ENCODE measurements at regions of chr5 and their contacts with region 1.

Region 1: DNA sequence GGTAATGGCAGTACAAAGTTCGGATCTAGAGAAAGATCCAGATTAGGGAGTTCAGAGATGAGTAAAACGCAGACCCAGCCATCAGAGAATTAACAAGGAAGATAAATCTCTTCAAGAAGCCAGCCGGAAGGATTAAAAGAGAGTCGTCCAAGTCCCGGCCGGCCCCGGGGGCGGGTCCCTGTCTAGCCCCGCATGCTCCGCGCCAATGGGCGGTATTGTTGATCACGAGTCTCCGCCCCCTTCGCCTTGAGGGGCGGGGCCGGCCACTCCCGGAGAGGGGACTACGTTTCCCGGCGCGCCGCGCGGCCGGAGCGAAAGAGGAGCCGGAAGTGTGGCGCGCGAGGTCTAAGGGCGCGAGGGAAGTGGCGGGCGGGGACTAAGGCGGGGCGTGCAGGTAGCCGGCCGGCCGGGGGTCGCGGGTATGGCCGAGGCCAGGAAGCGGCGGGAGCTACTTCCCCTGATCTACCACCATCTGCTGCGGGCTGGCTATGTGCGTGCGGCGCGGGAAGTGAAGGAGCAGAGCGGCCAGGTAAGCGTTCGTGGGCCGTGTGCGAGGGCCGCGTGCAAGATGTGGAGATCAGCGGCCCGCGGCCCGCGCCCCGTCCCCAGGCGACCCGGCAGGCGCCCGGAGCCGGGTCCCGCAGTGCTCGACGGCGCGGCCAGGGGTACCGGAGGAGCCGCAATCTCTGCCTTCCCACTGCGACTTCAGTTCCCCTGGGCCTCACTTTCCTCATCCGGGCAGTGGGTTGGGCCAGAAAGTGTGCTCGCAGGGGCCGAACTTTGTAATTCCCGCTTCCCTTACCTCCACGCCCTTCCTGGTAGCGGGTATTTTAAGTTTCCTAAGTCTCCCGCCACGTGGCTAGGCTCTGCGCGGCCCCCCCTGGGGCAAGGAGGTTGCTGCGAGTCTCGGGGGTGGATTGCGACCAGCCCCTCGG is at the start of gene TCOF1:
- DNase-seq: peak; percentile 97 to 99 (median 99)
- ATAC-seq: peak; percentile 98 to 99
- H3K4me3 ChIP-seq: peak within 1 kb of the TSS; percentile 70
- H3K27ac ChIP-seq: no peak within 1 kb of the TSS
- H3K4me1 ChIP-seq: no peaks in the 10 kb centered on the region
- H3K27me3 ChIP-seq: no peaks in the 10 kb centered on the region
- total RNA-seq, gene TCOF1: 14.3 to 22.7 (median 17.5) TPM

Region 2: GRCh38 chr5:150129813-150130492 is 227.6 kb before region 1 on chr5:
- intact Hi-C with region 1: loop called in 1 of 4 experiments (anchors 10 kb)
- DNase-seq: peak; percentile 77 to 90 (median 90)
- ATAC-seq: peak; percentile 80 to 85
- H3K4me3 ChIP-seq: no peak overlapping the region
- H3K27ac ChIP-seq: no peak overlapping the region
- H3K4me1 ChIP-seq: no peaks in the 10 kb centered on the region
- H3K27me3 ChIP-seq: no peaks in the 10 kb centered on the region

Region 3: GRCh38 chr5:150409638-150410523 is 52.3 kb after region 1 on chr5:
- intact Hi-C with region 1: no loop called
- DNase-seq: peak; percentile 71 to 85 (median 83)
- ATAC-seq: peak; percentile 89 to 91
- H3K4me3 ChIP-seq: peak overlapping the region; percentile 39
- H3K27ac ChIP-seq: peak overlapping the region; percentile 95
- H3K4me1 ChIP-seq: peaks cover 2% of the 10 kb centered on the region
- H3K27me3 ChIP-seq: no peaks in the 10 kb centered on the region

Region 4: GRCh38 chr5:150449517-150450339 is 92.1 kb after region 1 on chr5 and contains the start of gene RPS14:
- intact Hi-C with region 1: loop called in 1 of 4 experiments (anchors 10 kb)
- DNase-seq: peak; percentile 96 to 98 (median 97)
- ATAC-seq: peak; percentile 97 to 98
- H3K4me3 ChIP-seq: peak within 1 kb of the TSS; percentile 74
- H3K27ac ChIP-seq: peak within 1 kb of the TSS; percentile 98
- H3K4me1 ChIP-seq: peaks cover 6% of the 10 kb centered on the region
- H3K27me3 ChIP-seq: no peaks in the 10 kb centered on the region
- total RNA-seq, gene RPS14: 1,254 to 1,552 (median 1,386) TPM

Measured in right cardiac atrium (tissue), 5 donors.